Heart right ventricle (tissue), 16 donors: ENCODE measurements at regions of chr5 and their contacts with region 1.

Region 1: GRCh38 chr5:127572930-127573329 is 55.5 kb downstream of the PRRC1 start:
- DNase-seq: no peak
- ATAC-seq: no peak
- H3K4me3 ChIP-seq: no peak overlapping the region
- H3K27ac ChIP-seq: no peak overlapping the region
- H3K4me1 ChIP-seq: no peaks in the 10 kb centered on the region
- H3K27me3 ChIP-seq: peaks cover 0 to 11% (median 0%) of the 10 kb centered on the region in 7 donors
- CTCF ChIP-seq: peak in 6 of 9 donors; percentile 5 to 27 (median 24)

Region 2: DNA sequence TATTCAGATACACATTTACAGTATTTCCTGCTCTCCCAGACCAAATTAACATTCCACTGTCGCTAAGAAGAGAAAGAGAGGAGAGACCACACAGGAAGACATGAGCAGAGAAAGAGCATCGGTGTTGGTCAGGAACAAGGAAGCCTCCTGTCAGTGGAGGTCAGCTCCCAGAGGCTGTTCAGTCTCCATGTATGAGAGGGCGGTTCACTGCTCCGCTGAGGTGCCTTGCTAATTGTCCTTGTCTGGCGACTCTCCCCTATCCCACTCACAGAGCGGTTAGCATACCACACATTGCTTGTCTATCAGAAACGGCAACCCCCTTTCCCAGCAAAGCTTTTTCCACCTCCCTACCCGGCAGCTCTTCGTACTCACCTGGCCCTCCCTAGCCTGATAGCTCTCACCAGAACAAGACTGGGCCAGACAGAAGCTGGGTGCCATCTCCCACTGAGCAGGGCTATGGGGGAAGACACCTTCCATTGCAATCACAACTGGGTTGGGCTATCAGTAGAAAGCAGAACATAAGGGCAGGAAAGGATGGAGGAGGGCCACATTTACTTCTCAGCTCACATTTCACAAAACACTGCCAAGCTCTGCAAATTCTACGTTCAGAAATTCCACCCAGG is 854.6 kb before region 1 on chr5:
- intact Hi-C with region 1: loop called in 1 of 10 experiments (anchors 5 kb)
- DNase-seq: no peak
- ATAC-seq: no peak
- H3K4me3 ChIP-seq: no peak overlapping the region
- H3K27ac ChIP-seq: no peak overlapping the region
- H3K4me1 ChIP-seq: no peaks in the 10 kb centered on the region
- H3K27me3 ChIP-seq: no peaks in the 10 kb centered on the region
- CTCF ChIP-seq: no peak

Region 3: DNA sequence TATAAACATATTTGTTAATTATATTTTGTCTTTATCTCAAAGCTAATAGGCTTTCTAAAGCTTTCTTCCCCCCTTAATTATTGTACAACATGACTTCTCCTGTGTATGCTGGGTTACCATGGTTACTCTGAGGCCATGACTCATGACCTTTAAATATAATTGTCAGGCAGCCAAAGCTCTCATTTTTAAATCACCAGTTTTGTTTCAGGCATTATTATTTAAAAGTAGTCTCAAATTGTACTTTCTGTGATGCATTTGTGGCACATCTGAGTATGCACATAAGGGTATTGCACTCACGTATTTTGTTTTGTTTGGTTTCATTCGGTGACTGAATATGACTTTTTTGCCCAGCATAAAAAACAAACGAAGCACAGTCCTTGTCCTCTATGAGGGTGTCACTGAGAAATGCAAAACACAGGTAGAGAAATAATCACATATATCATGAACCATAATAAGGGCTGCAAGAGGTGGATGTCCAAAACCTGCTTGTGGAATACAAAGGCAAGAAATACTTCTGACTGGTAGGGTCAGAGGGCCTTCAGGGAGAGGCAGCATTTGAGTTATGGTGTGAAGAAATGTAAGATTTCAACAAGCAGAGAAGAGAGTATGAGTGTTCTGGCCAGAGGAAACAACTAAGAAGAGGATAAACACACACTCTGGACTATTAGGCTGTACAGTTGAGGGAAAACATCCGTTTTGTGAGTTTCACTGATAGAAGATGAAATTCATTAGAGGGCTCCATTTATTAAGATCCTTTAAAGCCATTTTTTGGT is 132.4 kb after region 1 on chr5:
- intact Hi-C with region 1: loop called in 1 of 10 experiments (anchors 10 kb)
- DNase-seq: peak in 1 of 2 donors; percentile 23
- ATAC-seq: peak in 6 of 8 donors; percentile 46 to 71 (median 58)
- H3K4me3 ChIP-seq: no peak overlapping the region
- H3K27ac ChIP-seq: peak overlapping the region in 5 of 10 donors; percentile 3 to 34 (median 18)
- H3K4me1 ChIP-seq: peaks cover 0 to 54% (median 26%) of the 10 kb centered on the region in 9 donors
- H3K27me3 ChIP-seq: no peaks in the 10 kb centered on the region
- CTCF ChIP-seq: no peak